Dorsolateral prefrontal cortex (tissue), 120 donors: ENCODE measurements at regions of chr4 and their contacts with region 1.

Region 1: GRCh38 chr4:5890063-5890727 is 2.7 kb downstream of the CRMP1 start:
- DNase-seq: peak; percentile 54 to 92 (median 84)
- H3K4me3 ChIP-seq: peak overlapping the region; percentile 0 to 81 (median 58)
- H3K27ac ChIP-seq: peak overlapping the region in 34 of 59 donors; percentile 9 to 78 (median 60)
- H3K27me3 ChIP-seq: peaks cover 0 to 88% (median 33%) of the 10 kb centered on the region in 45 donors
- CTCF ChIP-seq: no peak

Region 2: DNA sequence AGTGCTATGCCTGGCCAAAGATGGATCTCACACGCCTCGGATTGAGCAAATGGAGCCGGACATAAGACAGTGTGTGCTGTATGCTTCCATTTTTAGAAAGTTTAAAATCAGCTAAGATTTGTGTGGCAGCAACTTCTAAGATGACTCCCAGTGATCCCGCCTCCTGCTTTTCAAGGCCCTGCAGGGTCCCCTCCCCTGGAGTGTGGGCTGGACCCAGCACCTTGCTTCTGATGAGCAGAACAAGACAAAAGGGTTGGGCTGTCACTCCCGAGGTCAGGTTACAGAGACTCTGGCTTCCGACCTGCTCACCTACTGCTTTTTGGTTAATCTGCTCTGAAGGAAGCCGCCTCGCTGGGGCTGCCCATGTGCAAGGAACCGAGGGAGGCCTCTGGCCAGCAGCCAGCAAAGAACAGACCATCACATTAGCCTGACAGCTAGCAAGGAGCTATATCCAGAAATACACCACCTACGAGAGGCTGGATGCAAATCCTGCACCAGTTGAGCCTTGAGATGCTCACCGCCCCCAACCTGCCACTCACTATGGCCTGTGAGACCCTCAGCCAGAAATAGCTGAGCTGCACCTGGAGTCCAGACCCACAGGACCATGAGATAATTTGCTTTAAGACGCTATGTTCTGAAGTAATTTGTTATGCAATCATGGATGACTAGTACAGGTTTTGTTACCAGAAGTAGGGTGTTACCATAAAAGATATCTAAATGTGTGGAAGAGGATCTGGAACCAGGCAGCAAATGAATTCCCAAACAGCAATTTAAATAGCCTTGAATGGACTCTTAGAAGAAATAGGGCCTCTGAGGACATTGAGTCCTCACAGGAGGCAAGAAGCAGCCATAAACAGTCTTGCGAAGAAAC is 44.9 kb before region 1 on chr4:
- intact Hi-C with region 1: loop called in 1 of 2 experiments (anchors 5 kb)
- DNase-seq: peak in 8 of 10 donors; percentile 38 to 78 (median 64)
- H3K4me3 ChIP-seq: peak overlapping the region in 1 of 59 donors; percentile 15
- H3K27ac ChIP-seq: peak overlapping the region in 52 of 59 donors; percentile 17 to 84 (median 70)
- H3K27me3 ChIP-seq: peaks cover 0 to 5% (median 0%) of the 10 kb centered on the region in 45 donors
- CTCF ChIP-seq: no peak

Region 3: GRCh38 chr4:6032249-6033244 is 142.4 kb after region 1 on chr4:
- intact Hi-C with region 1: no loop called
- DNase-seq: peak in 2 of 10 donors; percentile 33 to 44
- H3K4me3 ChIP-seq: no peak overlapping the region
- H3K27ac ChIP-seq: peak overlapping the region in 26 of 59 donors; percentile 4 to 75 (median 44)
- H3K27me3 ChIP-seq: no peaks in the 10 kb centered on the region
- CTCF ChIP-seq: peak in 43 of 56 donors; percentile 13 to 63 (median 34)

Region 4: DNA sequence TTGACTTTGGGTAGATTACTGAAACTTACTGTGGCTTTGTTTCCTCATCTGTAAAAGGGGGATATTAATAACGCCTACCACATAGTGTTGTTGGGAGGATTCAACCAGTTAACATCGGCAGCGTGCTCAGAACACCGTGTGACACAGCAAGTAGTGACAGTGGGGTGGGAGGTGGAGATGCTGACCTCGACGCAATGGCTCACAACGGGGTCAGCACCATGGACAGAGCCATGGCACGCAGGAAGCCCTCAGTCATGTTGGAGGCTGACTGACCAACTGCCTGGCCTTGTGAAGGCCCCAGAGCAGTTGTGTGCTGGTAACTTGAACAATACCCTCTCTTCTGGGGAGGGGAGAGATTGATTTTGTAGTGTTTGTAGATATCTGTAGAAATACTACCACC is 472.7 kb after region 1 on chr4:
- intact Hi-C with region 1: no loop called
- DNase-seq: no peak
- H3K4me3 ChIP-seq: no peak overlapping the region
- H3K27ac ChIP-seq: peak overlapping the region in 4 of 59 donors; percentile 33 to 76 (median 59)
- H3K27me3 ChIP-seq: no peaks in the 10 kb centered on the region
- CTCF ChIP-seq: no peak